ENCODE measurements at regions of chr7 and their contacts with region 1.

Region 1: GRCh38 chr7:111752022-111752582 is 189.8 kb upstream of the IMMP2L start:
- DNase-seq: no peak
- H3K4me3 ChIP-seq: no peak overlapping the region
- H3K27ac ChIP-seq: no peak overlapping the region
- H3K27me3 ChIP-seq: no peaks in the 10 kb centered on the region
- CTCF ChIP-seq: peak; percentile 92

Region 2: DNA sequence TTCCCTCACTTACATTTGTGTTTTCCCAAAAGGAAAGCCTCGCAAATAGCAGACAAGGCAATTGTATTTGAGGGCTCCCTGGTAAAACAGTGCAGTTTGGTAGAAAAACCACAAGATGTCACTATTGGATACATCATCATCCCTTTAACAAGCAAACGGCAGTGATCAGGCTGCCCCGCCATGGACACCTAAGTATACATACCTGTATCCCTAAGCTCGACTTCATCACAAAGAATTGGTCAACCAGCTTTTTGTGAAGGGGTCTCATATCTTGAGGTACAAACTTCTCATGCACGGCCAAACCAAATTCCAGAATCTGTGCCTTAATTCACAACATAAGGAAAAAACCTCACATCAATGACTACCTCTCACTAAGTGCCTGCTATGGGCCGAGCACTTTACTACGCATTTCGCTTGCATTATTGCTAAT is 10.3 kb before region 1 on chr7:
- CTCF ChIA-PET with region 1: interaction called, 44 read pairs
- POLR2A ChIA-PET with region 1: no interaction called
- DNase-seq: peak; percentile 45
- H3K4me3 ChIP-seq: no peak overlapping the region
- H3K27ac ChIP-seq: no peak overlapping the region
- H3K27me3 ChIP-seq: no peaks in the 10 kb centered on the region
- CTCF ChIP-seq: peak; percentile 77

Region 3: DNA sequence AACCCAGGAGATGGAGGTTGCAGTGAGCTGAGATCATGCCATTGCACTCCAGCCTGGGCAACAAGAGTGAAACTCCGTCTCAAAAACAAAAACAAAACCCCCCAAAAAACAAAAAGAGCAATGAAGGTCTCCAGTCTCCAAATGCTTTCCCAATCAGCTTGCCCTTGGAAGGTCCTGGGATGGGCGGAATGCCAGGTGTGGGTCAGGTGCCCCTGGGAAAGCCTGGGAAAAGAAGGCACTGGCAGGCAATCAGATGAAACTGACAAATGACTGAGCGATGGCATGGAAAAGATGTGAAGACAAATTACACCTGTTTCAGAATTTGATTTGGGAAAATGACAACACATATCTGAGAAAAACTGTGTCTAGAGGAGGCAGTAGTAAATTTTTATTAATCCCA is 20.6 kb after region 1 on chr7:
- CTCF ChIA-PET with region 1: no interaction called
- POLR2A ChIA-PET with region 1: no interaction called
- DNase-seq: no peak
- H3K4me3 ChIP-seq: no peak overlapping the region
- H3K27ac ChIP-seq: no peak overlapping the region
- H3K27me3 ChIP-seq: no peaks in the 10 kb centered on the region
- CTCF ChIP-seq: no peak

Region 4: GRCh38 chr7:111867348-111867931 is 115.3 kb after region 1 on chr7:
- CTCF ChIA-PET with region 1: interaction called, 10 read pairs
- POLR2A ChIA-PET with region 1: no interaction called
- DNase-seq: no peak
- H3K4me3 ChIP-seq: no peak overlapping the region
- H3K27ac ChIP-seq: no peak overlapping the region
- H3K27me3 ChIP-seq: no peaks in the 10 kb centered on the region
- CTCF ChIP-seq: no peak

Region 5: DNA sequence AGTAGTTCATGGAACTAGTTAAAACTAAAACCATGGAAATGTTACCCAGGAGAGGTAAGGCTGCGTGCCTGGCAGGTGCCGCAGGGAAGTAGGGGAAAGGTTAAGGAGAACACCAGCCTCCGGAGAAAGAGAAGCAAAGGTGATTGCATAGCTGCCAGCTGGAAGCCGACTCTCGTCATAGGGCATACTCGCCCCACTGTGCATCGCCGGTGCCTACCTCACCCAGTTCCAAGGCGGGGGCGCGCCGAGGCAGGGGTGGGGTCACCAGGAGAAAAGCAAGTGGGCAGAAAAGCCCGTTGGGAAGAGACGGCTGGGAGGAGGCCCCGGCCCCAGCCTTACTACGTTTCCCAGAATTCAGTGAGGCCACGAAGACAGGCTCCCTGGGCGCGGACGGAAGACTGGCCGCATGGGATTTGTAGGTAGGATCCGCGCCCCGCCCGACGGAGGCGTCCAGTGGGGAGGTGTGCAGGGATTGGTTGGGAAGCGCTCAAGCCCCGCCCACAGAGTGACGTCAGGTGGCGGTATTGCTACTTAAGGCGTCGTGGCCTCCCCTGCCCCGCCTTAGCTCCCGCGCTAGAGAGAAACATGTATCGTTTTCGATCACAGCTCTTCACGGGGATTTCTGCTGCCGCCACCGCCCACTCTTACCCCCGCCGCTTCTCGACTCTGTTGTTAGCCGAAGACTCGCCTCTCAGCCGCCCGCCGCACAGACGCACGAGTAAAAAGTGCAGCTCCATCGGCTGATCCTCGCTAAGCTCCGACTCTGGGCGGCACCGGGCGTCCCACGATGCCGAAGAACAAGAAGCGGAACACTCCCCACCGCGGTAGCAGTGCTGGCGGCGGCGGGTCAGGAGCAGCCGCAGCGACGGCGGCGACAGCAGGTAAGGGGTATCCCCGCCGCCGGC is 698.1 kb after region 1 on chr7 and contains the start of gene IFRD1:
- CTCF ChIA-PET with region 1: interaction called, 11 read pairs
- POLR2A ChIA-PET with region 1: interaction called, 5 read pairs
- DNase-seq: peak; percentile 98
- H3K4me3 ChIP-seq: peak within 1 kb of the TSS; percentile 97
- H3K27ac ChIP-seq: peak within 1 kb of the TSS; percentile 94
- H3K27me3 ChIP-seq: no peaks in the 10 kb centered on the region
- CTCF ChIP-seq: no peak
- polyA plus RNA-seq, gene IFRD1: 35.4 and 46.9 TPM in 2 replicates